Caco-2 (cell line): ENCODE measurements at regions of chr17 and their contacts with region 1.

Region 1: GRCh38 chr17:74493381-74493833 is 27.0 kb downstream of the CD300A start:
- DNase-seq: peak; percentile 72 to 84
- H3K4me3 ChIP-seq: no peak overlapping the region
- H3K4me3 Mint-ChIP-seq: no peak overlapping the region
- H3K27ac Mint-ChIP-seq: no peak overlapping the region
- H3K4me1 ChIP-seq: no peaks in the 10 kb centered on the region
- H3K4me1 Mint-ChIP-seq: no peaks in the 10 kb centered on the region
- H3K27me3 ChIP-seq: no peaks in the 10 kb centered on the region
- H3K27me3 Mint-ChIP-seq: peaks cover 10% of the 10 kb centered on the region
- CTCF ChIP-seq: peak; percentile 89 to 93

Region 2: GRCh38 chr17:74361230-74362068 is 132.0 kb before region 1 on chr17 and contains the start of gene BTBD17:
- CTCF ChIA-PET with region 1: no interaction called
- POLR2A ChIA-PET with region 1: no interaction called
- intact Hi-C with region 1: no loop called
- DNase-seq: peak in 1 of 2 experiments; percentile 79
- H3K4me3 ChIP-seq: no peak within 1 kb of the TSS
- H3K4me3 Mint-ChIP-seq: no peak within 1 kb of the TSS
- H3K27ac Mint-ChIP-seq: no peak within 1 kb of the TSS
- H3K4me1 ChIP-seq: no peaks in the 10 kb centered on the region
- H3K4me1 Mint-ChIP-seq: no peaks in the 10 kb centered on the region
- H3K27me3 ChIP-seq: no peaks in the 10 kb centered on the region; the same call in 1 of the 2 replicates
- H3K27me3 Mint-ChIP-seq: peaks cover 6% of the 10 kb centered on the region
- CTCF ChIP-seq: peak; percentile 77 to 78
- total RNA-seq, gene BTBD17: not detected in 2 replicates

Region 3: GRCh38 chr17:74528491-74529199 is 35.2 kb after region 1 on chr17:
- CTCF ChIA-PET with region 1: interaction called, 4 read pairs
- POLR2A ChIA-PET with region 1: no interaction called
- intact Hi-C with region 1: loop called (anchors 1 kb)
- DNase-seq: no peak
- H3K4me3 ChIP-seq: no peak overlapping the region
- H3K4me3 Mint-ChIP-seq: no peak overlapping the region
- H3K27ac Mint-ChIP-seq: no peak overlapping the region
- H3K4me1 ChIP-seq: no peaks in the 10 kb centered on the region
- H3K4me1 Mint-ChIP-seq: no peaks in the 10 kb centered on the region
- H3K27me3 ChIP-seq: 0 out of 2 replicates have a peak, but pooled peaks cover 1% of the 10 kb centered on the region
- H3K27me3 Mint-ChIP-seq: peaks cover 32% of the 10 kb centered on the region
- CTCF ChIP-seq: no peak

Region 4: DNA sequence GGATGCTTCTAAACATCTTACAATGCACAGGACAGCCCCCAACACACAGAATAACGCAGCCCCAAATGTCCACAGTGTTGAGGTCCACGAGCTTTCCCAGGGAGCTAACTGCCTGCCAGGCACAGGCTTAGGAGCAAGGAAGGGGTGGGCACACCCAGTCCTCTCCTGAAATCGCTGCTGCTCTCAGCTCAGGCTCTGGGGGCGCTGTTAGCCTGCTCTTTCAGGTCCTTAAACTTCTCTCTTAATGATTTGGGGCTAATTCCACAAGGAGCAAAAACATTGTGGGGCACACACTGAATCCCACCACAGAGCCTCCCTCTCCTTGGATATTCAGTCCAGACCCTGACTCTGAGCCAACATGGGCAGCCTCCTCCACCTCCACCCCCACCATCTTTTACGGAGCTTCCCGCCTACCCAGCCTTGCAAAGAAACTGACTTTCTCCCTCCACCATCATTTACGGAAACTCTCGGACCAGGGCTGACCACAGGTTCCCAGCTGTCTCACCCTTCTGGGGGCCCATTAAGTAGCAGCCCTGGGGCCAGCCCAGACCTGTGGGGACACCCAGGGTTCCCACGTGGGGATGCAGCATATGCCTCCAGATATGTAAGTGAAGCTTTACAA is 72.8 kb after region 1 on chr17:
- CTCF ChIA-PET with region 1: no interaction called
- POLR2A ChIA-PET with region 1: no interaction called
- intact Hi-C with region 1: no loop called
- DNase-seq: peak in 1 of 2 experiments; percentile 47
- H3K4me3 ChIP-seq: no peak overlapping the region
- H3K4me3 Mint-ChIP-seq: no peak overlapping the region
- H3K27ac Mint-ChIP-seq: no peak overlapping the region
- H3K4me1 ChIP-seq: no peaks in the 10 kb centered on the region
- H3K4me1 Mint-ChIP-seq: peaks cover 6% of the 10 kb centered on the region
- H3K27me3 ChIP-seq: no peaks in the 10 kb centered on the region; the same call in none of the 2 replicates
- H3K27me3 Mint-ChIP-seq: peaks cover 33% of the 10 kb centered on the region
- CTCF ChIP-seq: peak; percentile 73 to 76

Region 5: GRCh38 chr17:74601944-74602572 is 108.7 kb after region 1 on chr17:
- CTCF ChIA-PET with region 1: no interaction called
- POLR2A ChIA-PET with region 1: no interaction called
- intact Hi-C with region 1: loop called (anchors 10 kb)
- DNase-seq: peak; percentile 55 to 59
- H3K4me3 ChIP-seq: no peak overlapping the region
- H3K4me3 Mint-ChIP-seq: no peak overlapping the region
- H3K27ac Mint-ChIP-seq: no peak overlapping the region
- H3K4me1 ChIP-seq: no peaks in the 10 kb centered on the region
- H3K4me1 Mint-ChIP-seq: no peaks in the 10 kb centered on the region
- H3K27me3 ChIP-seq: peaks cover 1% of the 10 kb centered on the region
- H3K27me3 Mint-ChIP-seq: peaks cover 44% of the 10 kb centered on the region
- CTCF ChIP-seq: peak; percentile 81